ENCODE measurements at regions of chr17 and their contacts with region 1.

Region 1: GRCh38 chr17:79082311-79083190 is 7.9 kb downstream of the ENGASE start:
- DNase-seq: peak; percentile 30
- H3K4me3 ChIP-seq: no peak overlapping the region
- H3K27ac ChIP-seq: no peak overlapping the region
- H3K4me1 ChIP-seq: no peaks in the 10 kb centered on the region
- H3K27me3 ChIP-seq: no peaks in the 10 kb centered on the region
- CTCF ChIP-seq: peak; percentile 90
- POLR2A ChIP-seq: no peak

Region 2: GRCh38 chr17:79019632-79020584 is 62.6 kb before region 1 on chr17:
- CTCF ChIA-PET with region 1: interaction called, 3 read pairs
- POLR2A ChIA-PET with region 1: no interaction called
- dilution Hi-C with region 1: no loop called
- intact Hi-C with region 1: loop called (anchors 1 kb)
- DNase-seq: peak; percentile 67
- H3K4me3 ChIP-seq: no peak overlapping the region
- H3K27ac ChIP-seq: no peak overlapping the region
- H3K4me1 ChIP-seq: peaks cover 7% of the 10 kb centered on the region
- H3K27me3 ChIP-seq: peaks cover 0 to 10% of the 10 kb centered on the region in 2 experiments
- CTCF ChIP-seq: peak; percentile 59 to 63
- POLR2A ChIP-seq: no peak

Region 3: DNA sequence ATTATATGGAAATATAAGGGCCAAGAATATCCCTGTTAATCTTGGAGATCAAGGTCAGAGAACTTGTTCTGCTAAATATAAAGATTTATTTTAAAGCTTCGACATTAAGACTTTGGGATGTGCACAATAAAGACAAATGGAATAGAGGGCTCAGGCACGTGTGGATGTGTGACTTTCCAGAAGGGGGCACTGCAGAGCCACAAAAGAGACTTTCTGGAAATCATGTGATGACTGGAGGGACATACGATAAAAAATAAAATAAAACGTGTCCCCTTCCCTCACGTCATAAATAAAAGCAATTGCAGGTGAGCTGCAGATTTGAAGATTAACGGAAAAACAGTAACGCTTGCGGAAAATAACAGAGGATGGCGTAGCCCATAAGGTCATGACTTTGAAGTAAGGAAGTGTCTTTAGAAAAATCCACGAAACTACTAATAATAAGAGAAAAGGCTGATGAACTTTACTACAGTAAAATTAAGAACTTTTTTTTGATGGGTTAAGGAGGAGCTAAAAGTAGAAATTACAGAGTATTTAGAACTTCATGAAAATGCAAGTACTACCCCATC is 17.4 kb before region 1 on chr17:
- CTCF ChIA-PET with region 1: interaction called, 9 read pairs
- POLR2A ChIA-PET with region 1: no interaction called
- dilution Hi-C with region 1: no loop called
- intact Hi-C with region 1: loop called (anchors 1 kb)
- DNase-seq: peak; percentile 45
- H3K4me3 ChIP-seq: no peak overlapping the region
- H3K27ac ChIP-seq: no peak overlapping the region
- H3K4me1 ChIP-seq: no peaks in the 10 kb centered on the region
- H3K27me3 ChIP-seq: peaks cover 4 to 7% of the 10 kb centered on the region in 2 experiments
- CTCF ChIP-seq: peak; percentile 45 to 52
- POLR2A ChIP-seq: no peak